Mammary epithelial cell (primary cell): ENCODE measurements at regions of chr11 and their contacts with region 1.

Region 1: GRCh38 chr11:123301696-123302400 is 106.8 kb upstream of the CLMP start:
- DNase-seq: peak; percentile 26
- H3K4me3 ChIP-seq: peak overlapping the region; percentile 11 to 41 (median 40)
- H3K27ac ChIP-seq: no peak overlapping the region
- H3K4me1 ChIP-seq: peaks cover 12% of the 10 kb centered on the region
- H3K27me3 ChIP-seq: peaks cover 4% of the 10 kb centered on the region
- CTCF ChIP-seq: peak; percentile 53 to 73

Region 2: GRCh38 chr11:123129920-123130319 is 171.9 kb before region 1 on chr11:
- CTCF ChIA-PET with region 1: no interaction called
- dilution Hi-C with region 1: no loop called
- in situ Hi-C with region 1: no loop called
- intact Hi-C with region 1: no loop called
- DNase-seq: peak; percentile 62
- H3K4me3 ChIP-seq: no peak overlapping the region
- H3K27ac ChIP-seq: peak overlapping the region; percentile 7
- H3K4me1 ChIP-seq: peaks cover 10% of the 10 kb centered on the region
- H3K27me3 ChIP-seq: no peaks in the 10 kb centered on the region
- CTCF ChIP-seq: no peak

Region 3: GRCh38 chr11:123284454-123284853 is 17.4 kb before region 1 on chr11:
- CTCF ChIA-PET with region 1: interaction called, 14 read pairs
- dilution Hi-C with region 1: no loop called
- in situ Hi-C with region 1: no loop called
- intact Hi-C with region 1: no loop called
- DNase-seq: no peak
- H3K4me3 ChIP-seq: no peak overlapping the region
- H3K27ac ChIP-seq: no peak overlapping the region
- H3K4me1 ChIP-seq: no peaks in the 10 kb centered on the region
- H3K27me3 ChIP-seq: peaks cover 4% of the 10 kb centered on the region
- CTCF ChIP-seq: no peak

Region 4: DNA sequence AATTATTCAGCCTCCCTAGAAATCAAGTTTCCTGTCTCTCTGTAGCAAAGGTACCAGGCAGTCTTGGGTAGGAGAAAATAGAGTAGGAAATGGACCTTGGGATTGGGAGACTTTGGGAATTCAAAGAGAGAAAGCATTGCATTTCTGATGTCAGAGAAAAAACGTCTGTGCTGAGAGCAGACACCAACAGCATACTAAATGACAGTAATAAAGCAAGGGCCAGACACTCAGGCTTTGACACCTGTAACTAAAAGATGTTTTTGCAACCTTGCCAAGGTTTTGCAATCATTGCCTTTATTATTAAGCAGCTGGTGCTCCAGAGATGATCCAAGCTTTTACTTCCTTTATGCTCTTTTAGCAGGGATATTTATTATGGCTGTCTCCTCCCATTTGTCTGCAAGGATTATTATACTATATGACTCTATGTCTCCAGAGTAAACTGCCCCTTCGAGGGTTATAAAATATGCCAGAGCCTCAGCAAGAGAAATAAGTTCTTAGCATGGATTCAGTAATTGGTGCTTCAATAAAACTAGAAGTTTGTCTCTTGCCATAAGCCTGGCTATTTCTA is 43.0 kb after region 1 on chr11:
- CTCF ChIA-PET with region 1: no interaction called
- dilution Hi-C with region 1: no loop called
- in situ Hi-C with region 1: no loop called
- intact Hi-C with region 1: no loop called
- DNase-seq: no peak
- H3K4me3 ChIP-seq: no peak overlapping the region
- H3K27ac ChIP-seq: no peak overlapping the region
- H3K4me1 ChIP-seq: no peaks in the 10 kb centered on the region
- H3K27me3 ChIP-seq: no peaks in the 10 kb centered on the region
- CTCF ChIP-seq: no peak

Region 5: GRCh38 chr11:123407130-123407995 is 105.5 kb after region 1 on chr11:
- CTCF ChIA-PET with region 1: no interaction called
- dilution Hi-C with region 1: no loop called
- in situ Hi-C with region 1: no loop called
- intact Hi-C with region 1: no loop called
- DNase-seq: peak; percentile 41
- H3K4me3 ChIP-seq: no peak overlapping the region
- H3K27ac ChIP-seq: no peak overlapping the region
- H3K4me1 ChIP-seq: no peaks in the 10 kb centered on the region
- H3K27me3 ChIP-seq: peaks cover 7% of the 10 kb centered on the region
- CTCF ChIP-seq: peak; percentile 84 to 87